ENCODE measurements at regions of chr16 and their contacts with region 1.

Region 1: DNA sequence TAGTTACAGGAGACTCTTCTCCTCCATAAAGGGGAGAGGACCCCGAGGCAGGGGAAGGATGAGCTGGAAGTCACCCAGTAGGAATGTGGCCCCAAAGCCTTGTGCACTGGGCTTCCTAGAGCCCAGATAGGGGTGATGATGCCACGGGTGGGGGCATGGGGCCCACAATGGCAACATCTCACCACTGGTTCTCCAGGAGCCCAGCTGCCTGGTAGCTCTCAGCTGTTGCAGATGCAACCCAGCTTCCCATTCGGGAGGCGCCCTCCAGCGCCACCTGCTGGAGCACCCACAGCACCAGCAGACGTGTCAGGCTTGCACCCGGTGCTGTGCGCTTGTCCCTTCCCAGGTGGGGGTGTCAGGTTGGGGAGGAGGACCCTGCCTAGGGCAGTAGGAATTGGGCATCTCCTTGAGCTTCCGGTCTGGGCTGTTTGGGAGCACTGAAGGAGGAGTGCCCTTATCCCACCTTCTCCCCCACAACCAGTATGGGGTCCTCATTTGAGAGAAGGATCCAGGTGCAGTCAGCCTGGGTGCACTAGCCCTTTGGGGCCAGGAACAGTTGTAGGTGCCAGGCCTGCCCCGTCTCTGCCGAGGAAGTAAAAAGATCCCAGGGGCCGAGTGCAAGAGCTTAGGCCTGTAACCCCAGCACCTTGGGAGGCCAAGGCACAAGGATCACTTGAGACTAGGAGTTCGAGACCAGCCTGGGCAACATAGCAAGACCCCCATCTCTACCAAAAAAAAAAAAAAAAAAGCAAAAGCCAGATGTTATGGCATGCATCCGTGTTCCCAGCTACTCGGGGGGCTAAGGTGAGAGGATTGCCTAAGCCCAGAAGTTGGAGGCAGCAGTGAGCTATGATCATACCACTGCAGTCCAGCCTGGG is 14.4 kb downstream of the CDIPT start:
- DNase-seq: peak; percentile 83
- H3K4me3 ChIP-seq: no peak overlapping the region; a peak in 1 of 4 replicates
- H3K27ac ChIP-seq: no peak overlapping the region
- H3K4me1 ChIP-seq: no peaks in the 10 kb centered on the region
- H3K27me3 ChIP-seq: no peaks in the 10 kb centered on the region
- CTCF ChIP-seq: peak; percentile 89
- EP300 ChIP-seq: no peak
- RAD21 ChIP-seq: peak; percentile 70

Region 2: DNA sequence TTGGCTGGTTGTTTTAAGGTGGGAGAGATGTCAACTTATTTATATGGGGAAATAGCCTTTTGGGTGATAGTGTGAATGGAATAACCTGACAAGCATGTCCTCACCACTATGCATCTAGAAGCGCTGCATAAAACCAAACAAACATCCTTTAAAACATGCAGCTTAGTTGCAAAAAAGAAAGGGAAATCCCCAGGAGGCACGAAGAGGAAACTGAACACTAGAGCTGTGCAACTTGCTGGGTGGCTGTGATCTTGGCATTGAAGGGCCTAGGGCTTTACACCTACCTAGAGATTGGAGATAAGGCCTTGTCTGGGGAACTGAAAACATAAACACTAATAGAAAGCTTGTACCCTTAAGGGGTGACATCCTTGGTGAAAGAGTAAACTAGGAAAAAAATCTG is 110.1 kb before region 1 on chr16:
- CTCF ChIA-PET with region 1: no interaction called
- POLR2A ChIA-PET with region 1: no interaction called
- DNase-seq: no peak
- H3K4me3 ChIP-seq: no peak overlapping the region
- H3K27ac ChIP-seq: no peak overlapping the region
- H3K4me1 ChIP-seq: peaks cover 0 to 3% of the 10 kb centered on the region in 2 experiments; a peak in 1 of 4 replicates
- H3K27me3 ChIP-seq: peaks cover 8% of the 10 kb centered on the region; the same call in 1 of the 2 replicates
- CTCF ChIP-seq: no peak
- EP300 ChIP-seq: no peak
- RAD21 ChIP-seq: no peak

Region 3: DNA sequence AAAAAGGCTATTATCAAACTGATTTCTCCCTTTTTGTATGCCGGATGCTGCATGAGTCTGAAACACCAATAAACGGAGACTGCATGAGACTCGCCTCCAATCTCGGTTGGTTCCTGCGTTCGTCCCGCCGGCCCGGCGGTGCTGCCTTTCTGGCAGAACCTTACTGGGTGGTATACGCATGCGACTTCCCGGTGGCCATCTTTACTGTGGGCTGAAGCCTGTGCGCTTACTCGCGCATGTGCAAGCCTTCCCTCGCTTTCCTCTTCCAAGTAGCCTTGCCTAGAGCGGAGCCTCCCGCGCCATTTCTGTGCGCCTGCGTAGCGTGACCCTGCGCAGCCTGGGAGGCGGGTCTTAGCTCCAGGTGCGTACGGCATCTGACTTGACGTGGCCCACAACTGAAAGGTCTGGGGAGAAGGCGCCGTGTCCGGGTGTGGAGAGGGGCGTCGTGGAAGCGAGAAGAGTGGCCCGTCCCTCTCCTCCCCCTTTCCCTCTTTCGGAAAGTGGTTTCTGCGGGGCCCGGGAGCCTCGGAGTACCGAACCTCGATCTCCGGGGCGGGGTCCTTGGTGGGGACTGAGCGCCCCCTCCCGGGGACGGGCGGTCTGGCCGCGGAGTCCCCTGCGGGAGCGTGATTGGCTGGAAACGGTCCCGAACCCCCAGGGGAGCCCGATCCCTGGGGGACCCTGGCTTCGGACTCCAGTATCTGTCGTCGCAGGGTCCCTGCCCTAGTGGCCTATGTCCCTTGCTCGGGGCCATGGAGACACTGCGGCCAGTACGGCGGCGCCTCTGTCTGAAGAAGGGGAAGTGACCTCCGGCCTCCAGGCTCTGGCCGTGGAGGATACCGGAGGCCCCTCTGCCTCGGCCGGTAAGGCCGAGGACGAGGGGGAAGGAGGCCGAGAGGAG is 32.6 kb before region 1 on chr16 and contains the start of gene PAGR1:
- CTCF ChIA-PET with region 1: interaction called, 129 read pairs
- POLR2A ChIA-PET with region 1: interaction called, 3 read pairs
- DNase-seq: peak; percentile 93
- H3K4me3 ChIP-seq: peak within 1 kb of the TSS; percentile 72 to 77
- H3K27ac ChIP-seq: peak within 1 kb of the TSS; percentile 64 to 94
- H3K4me1 ChIP-seq: peaks cover 26 to 55% of the 10 kb centered on the region in 2 experiments; a peak in 3 of 4 replicates
- H3K27me3 ChIP-seq: no peaks in the 10 kb centered on the region
- CTCF ChIP-seq: peak; percentile 86
- EP300 ChIP-seq: no peak
- RAD21 ChIP-seq: peak; percentile 65
- polyA plus RNA-seq, gene PAGR1: 48.5 and 57.7 TPM in 2 replicates

Region 4: GRCh38 chr16:29862884-29863668 is 14.4 kb after region 1 on chr16 and contains the start of gene CDIPT:
- CTCF ChIA-PET with region 1: interaction called, 20 read pairs
- POLR2A ChIA-PET with region 1: no interaction called
- DNase-seq: peak; percentile 94
- H3K4me3 ChIP-seq: peak within 1 kb of the TSS; percentile 81 to 90
- H3K27ac ChIP-seq: peak within 1 kb of the TSS; percentile 88 to 95
- H3K4me1 ChIP-seq: peaks cover 0 to 17% of the 10 kb centered on the region in 2 experiments; a peak in 1 of 4 replicates
- H3K27me3 ChIP-seq: no peaks in the 10 kb centered on the region
- CTCF ChIP-seq: peak; percentile 71
- EP300 ChIP-seq: 0 out of 4 replicates have a peak, but pooled peaks of 1 of the 2 experiments have one; percentile 34
- RAD21 ChIP-seq: peak; percentile 17; the same call in 1 of the 2 replicates
- polyA plus RNA-seq, gene CDIPT: 90.7 and 94.8 TPM in 2 replicates

Region 5: GRCh38 chr16:29940656-29941055 is 92.0 kb after region 1 on chr16:
- CTCF ChIA-PET with region 1: no interaction called
- POLR2A ChIA-PET with region 1: no interaction called
- DNase-seq: no peak
- H3K4me3 ChIP-seq: no peak overlapping the region
- H3K27ac ChIP-seq: no peak overlapping the region
- H3K4me1 ChIP-seq: peaks cover 2 to 10% of the 10 kb centered on the region in 2 experiments; a peak in 1 of 4 replicates
- H3K27me3 ChIP-seq: no peaks in the 10 kb centered on the region
- CTCF ChIP-seq: no peak
- EP300 ChIP-seq: no peak
- RAD21 ChIP-seq: no peak

Measured in SK-N-SH (cell line).